WTC11 (cell line): ENCODE measurements at regions of chr6 and their contacts with region 1.

Region 1: GRCh38 chr6:143952947-143953701 is 54.9 kb downstream of the PLAGL1 start:
- DNase-seq: no peak
- ATAC-seq: no peak
- H3K4me3 Mint-ChIP-seq: no peak overlapping the region
- H3K27ac Mint-ChIP-seq: no peak overlapping the region
- H3K4me1 Mint-ChIP-seq: peaks cover 24% of the 10 kb centered on the region
- H3K27me3 Mint-ChIP-seq: peaks cover 45% of the 10 kb centered on the region
- CTCF ChIP-seq: no peak

Region 2: DNA sequence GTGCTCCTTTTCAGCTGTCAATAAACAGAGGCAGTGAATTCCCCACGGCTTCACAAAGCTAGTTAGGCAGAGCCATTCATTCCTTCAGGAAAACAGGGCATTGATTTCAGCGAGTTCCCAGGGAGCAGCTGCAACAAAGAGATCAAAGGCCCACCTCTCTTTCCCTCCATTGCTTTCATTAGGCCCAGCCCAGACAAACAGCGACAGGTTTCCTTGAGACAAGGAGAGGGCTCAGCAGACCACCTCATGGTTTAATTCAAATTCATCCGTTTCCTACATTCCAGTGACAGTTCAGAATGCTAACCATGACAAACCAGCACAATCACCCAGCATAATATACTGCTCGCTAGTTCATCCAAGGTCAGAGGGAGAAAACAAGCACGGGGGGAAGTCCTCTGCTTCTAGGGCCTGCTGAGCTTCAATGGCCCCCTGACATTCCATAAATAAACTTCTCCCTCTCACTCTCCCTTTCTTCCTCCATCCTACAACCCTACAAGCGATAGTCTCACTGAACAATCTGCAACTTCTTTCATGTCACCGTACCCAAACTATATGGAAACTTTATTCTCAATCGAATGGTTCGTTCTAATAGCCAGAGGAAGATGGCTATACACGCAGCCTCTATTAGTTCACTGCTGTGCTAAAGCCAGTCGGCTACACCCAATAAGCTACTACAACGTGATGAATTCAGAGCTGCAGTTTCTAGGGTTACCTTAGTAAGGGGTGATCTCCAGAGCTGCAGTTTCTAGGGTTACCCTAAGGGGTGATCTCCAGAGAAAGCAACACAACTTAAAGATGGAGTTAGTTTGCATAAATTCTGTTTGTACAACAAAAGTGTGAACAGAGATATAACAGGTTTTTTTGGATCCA is 20.2 kb after region 1 on chr6:
- CTCF ChIA-PET with region 1: interaction called, 10 read pairs
- POLR2A ChIA-PET with region 1: no interaction called
- DNase-seq: peak; percentile 60
- ATAC-seq: peak; percentile 91
- H3K4me3 Mint-ChIP-seq: peak overlapping the region; percentile 46
- H3K27ac Mint-ChIP-seq: peak overlapping the region; percentile 24
- H3K4me1 Mint-ChIP-seq: peaks cover 60% of the 10 kb centered on the region
- H3K27me3 Mint-ChIP-seq: peaks cover 58% of the 10 kb centered on the region; the same call in 1 of the 2 replicates
- CTCF ChIP-seq: no peak

Region 3: DNA sequence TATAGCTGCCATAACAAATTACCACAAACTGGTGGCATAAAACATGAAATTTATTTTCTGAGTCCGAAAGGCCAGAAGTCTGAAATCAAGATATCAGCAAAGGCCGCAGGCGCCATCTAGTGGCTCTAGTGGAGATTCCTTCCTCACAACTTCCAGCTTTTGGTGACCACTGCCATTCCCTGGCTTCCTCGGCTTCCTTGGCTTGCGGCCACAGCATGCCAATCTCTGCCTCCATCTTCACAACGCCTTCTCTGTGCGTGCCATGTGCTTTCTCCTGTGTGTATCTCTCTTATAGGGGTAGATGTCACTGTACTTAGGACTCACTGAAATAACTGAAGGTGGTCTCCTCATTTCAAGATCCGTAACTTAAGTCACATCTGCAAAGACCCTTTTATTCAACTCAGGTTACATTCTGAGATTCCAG is 60.4 kb after region 1 on chr6:
- CTCF ChIA-PET with region 1: interaction called, 12 read pairs
- POLR2A ChIA-PET with region 1: no interaction called
- DNase-seq: peak; percentile 79
- ATAC-seq: peak; percentile 63
- H3K4me3 Mint-ChIP-seq: no peak overlapping the region
- H3K27ac Mint-ChIP-seq: no peak overlapping the region
- H3K4me1 Mint-ChIP-seq: no peaks in the 10 kb centered on the region
- H3K27me3 Mint-ChIP-seq: peaks cover 50% of the 10 kb centered on the region
- CTCF ChIP-seq: peak; percentile 81